Tibial artery (tissue), 4 donors: ENCODE measurements at regions of chr11 and their contacts with region 1.

Region 1: GRCh38 chr11:76903329-76903728 is 42.6 kb downstream of the ACER3 start:
- DNase-seq: no peak
- H3K4me3 ChIP-seq: no peak overlapping the region
- H3K27ac ChIP-seq: no peak overlapping the region
- H3K4me1 ChIP-seq: no peaks in the 10 kb centered on the region
- H3K27me3 ChIP-seq: no peaks in the 10 kb centered on the region
- CTCF ChIP-seq: no peak

Region 2: GRCh38 chr11:75265851-75266531 is 1637.3 kb before region 1 on chr11:
- intact Hi-C with region 1: loop called (anchors 5 kb)
- DNase-seq: peak in 1 of 2 donors; percentile 59
- H3K4me3 ChIP-seq: no peak overlapping the region
- H3K27ac ChIP-seq: no peak overlapping the region
- H3K4me1 ChIP-seq: peaks cover 0 to 1% (median 0%) of the 10 kb centered on the region in 4 donors
- H3K27me3 ChIP-seq: no peaks in the 10 kb centered on the region
- CTCF ChIP-seq: no peak